ENCODE measurements at regions of chr4 and their contacts with region 1.

Region 1: DNA sequence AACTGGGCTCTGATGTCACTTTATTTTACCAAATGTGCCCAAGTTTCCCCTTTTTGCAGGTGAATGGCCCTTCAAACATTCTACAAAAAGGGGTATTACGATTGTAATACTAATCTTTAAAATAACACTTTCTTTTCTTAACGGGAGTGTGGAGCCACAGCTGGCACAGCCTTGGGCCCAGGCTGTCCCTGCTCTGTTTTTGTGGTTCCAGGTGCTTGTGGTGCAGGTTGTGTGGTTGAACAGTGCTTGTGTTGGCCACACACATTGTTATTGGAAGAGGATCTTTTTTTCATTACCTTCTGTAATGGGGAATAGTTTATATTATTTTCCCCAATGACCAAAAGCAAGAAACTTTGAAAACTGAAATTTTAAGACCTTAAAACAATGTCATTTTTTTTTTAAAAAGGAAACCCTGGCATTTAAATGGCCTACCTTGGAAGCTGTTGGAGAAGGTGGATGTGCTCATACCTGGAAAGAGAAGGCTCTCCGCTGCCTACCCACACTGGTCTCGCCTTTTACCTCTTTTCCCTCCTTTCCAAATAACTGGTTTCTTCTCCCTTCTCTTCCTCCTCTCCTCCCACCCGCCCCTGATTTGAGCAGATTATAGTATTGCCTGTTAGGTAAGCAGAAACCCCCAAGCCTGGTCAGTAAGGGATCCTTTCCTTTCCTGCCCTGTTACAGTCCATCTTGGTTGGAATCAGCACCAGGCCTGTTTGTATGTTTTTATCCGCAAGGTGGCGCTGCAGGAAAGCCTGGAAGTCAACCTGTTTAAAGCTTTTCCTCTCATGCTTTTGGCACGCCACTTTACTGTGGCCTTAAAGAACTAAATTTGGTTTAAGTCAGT is 28.6 kb downstream of the HADH start:
- DNase-seq: peak; percentile 79 to 91 (median 85)
- H3K4me3 ChIP-seq: no peak overlapping the region
- H3K27ac ChIP-seq: no peak overlapping the region
- H3K4me1 ChIP-seq: no peaks in the 10 kb centered on the region
- H3K27me3 ChIP-seq: no peaks in the 10 kb centered on the region
- CTCF ChIP-seq: peak; percentile 83

Region 2: DNA sequence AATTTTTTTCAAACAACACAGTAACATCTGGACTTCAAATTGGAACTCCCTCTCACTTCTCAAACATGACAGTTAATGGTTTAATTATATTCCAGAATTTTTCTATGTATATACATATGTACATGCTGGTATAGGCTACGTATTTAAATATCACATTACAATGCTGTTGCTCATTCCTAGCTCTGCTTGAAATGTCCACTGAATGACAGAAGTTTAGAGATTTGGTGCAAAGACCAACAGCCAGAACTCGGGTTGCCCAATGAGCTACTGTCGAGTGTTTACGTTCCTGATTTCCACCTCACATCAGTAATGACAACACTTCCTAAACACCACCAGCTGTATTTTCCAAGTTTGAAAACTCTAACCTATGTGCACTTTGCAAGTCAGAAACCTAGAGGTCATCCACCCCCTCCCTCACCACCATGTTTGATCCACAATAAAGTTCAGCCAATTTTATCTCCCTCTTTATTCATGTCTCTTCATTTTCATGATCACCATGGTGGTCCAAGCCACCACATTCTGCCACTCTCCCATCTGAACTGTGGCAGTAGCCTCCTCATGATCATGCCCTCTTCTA is 552.8 kb after region 1 on chr4:
- intact Hi-C with region 1: loop called (anchors 10 kb)
- DNase-seq: no peak
- H3K4me3 ChIP-seq: no peak overlapping the region
- H3K27ac ChIP-seq: no peak overlapping the region
- H3K4me1 ChIP-seq: no peaks in the 10 kb centered on the region
- H3K27me3 ChIP-seq: no peaks in the 10 kb centered on the region
- CTCF ChIP-seq: no peak

Measured in kidney (tissue), 22 donors.